CD4-positive, alpha-beta T cell (primary cell): ENCODE measurements at regions of chr11 and their contacts with region 1.

Region 1: DNA sequence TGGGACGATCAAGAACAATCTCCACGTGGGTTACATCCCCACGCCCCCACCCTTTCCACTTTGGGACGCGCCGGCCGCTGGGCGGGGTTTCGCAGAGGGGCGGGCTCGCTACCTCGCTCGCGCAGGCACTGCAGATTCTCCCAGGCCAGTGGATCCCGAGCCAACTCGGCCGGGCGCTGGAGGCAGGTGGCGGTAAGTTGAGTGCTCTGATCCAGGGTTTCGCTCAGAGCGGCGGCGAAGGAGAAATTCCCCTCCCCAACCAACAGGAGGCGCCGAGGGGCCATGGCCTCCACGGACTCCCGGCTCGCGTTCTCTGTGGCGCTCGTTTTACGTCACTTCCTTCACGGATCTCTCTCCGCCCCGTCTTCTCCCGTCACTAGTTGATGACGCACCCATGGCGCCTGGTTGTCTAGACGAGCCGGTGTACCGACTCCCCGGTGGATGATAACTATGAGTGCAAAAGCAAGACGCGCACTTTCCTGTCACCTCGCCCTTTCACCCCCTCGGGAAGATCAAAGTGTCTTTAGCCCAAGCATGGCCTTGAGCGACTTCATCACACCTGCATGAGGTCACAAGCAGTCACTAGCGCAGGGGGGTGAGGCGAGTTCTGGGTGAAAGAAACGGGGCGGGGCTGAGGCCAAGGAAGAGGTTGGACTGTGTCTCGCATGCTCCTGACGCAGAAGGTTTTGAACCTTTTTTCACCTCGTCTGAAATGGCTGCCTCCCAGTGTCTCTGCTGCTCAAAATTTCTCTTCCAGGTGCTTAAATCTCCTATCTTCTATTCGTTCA is at the starts of genes CFAP68 and FDXACB1:
- DNase-seq: peak; percentile 89 to 99 (median 93)
- ATAC-seq: peak; percentile 88
- H3K4me3 ChIP-seq: peak within 1 kb of the TSS; percentile 76
- H3K4me3 Mint-ChIP-seq: peak within 1 kb of the TSS; percentile 92
- H3K27ac ChIP-seq: peak within 1 kb of the TSS; percentile 97 to 99
- H3K27ac Mint-ChIP-seq: peak within 1 kb of the TSS; percentile 94
- H3K4me1 ChIP-seq: peaks cover 14% of the 10 kb centered on the region
- H3K4me1 Mint-ChIP-seq: peaks cover 18% of the 10 kb centered on the region
- H3K27me3 ChIP-seq: no peaks in the 10 kb centered on the region
- H3K27me3 Mint-ChIP-seq: no peaks in the 10 kb centered on the region
- CTCF ChIP-seq: peak; percentile 98
- total RNA-seq, gene CFAP68: 18.7 to 21.0 TPM
- total RNA-seq, gene FDXACB1: 3.4 to 3.9 TPM

Region 2: DNA sequence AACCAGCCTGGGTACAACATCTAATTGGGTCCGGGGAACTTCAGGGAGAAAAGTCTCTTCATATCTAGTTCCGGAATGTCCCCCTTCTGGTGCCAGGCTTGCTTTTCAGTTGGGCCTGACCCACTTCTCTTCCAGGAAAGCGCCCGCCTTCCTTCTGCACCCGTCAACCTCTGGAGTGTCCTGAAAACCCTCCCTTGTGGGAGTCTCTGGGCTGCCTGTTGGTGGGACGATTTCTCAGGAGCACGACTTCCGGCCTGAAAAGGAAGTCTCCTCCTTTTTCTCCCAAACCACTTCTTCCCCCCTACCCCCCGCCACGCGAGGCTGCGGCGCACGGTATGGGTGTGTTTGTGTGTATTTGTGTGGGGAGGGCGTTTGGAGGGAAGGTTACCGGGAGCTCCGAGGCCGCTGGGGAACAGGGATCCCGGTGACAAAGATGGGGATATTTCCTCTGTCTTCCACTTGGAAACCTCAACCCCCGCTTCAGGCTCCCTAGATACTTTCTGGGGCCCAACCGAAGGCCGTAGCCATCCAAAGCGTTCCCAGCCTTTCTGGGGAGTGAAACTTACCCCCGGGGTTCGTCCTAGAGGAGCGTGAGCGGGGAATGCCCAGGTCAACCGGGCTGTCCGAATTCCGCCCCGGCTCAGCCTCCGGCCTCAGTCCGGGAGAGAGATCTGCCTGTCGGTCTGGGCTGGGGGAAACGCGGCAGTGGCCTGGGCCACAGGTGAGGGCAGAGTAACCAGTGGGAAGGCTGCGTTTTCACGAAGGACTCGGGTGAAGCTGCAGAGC is 195.2 kb after region 1 on chr11 and contains the start of gene NKAPD1:
- CTCF ChIA-PET with region 1: no interaction called
- POLR2A ChIA-PET with region 1: no interaction called
- intact Hi-C with region 1: loop called (anchors 2 to 5 kb)
- DNase-seq: peak; percentile 65 to 92 (median 74)
- ATAC-seq: peak; percentile 87
- H3K4me3 ChIP-seq: peak within 1 kb of the TSS; percentile 80
- H3K4me3 Mint-ChIP-seq: peak within 1 kb of the TSS; percentile 97
- H3K27ac ChIP-seq: peak within 1 kb of the TSS; percentile 70 to 73
- H3K27ac Mint-ChIP-seq: peak within 1 kb of the TSS; percentile 78
- H3K4me1 ChIP-seq: peaks cover 13% of the 10 kb centered on the region
- H3K4me1 Mint-ChIP-seq: peaks cover 36% of the 10 kb centered on the region
- H3K27me3 ChIP-seq: no peaks in the 10 kb centered on the region
- H3K27me3 Mint-ChIP-seq: peaks cover 27% of the 10 kb centered on the region
- CTCF ChIP-seq: no peak
- total RNA-seq, gene NKAPD1: 14.8 to 16.0 TPM

Region 3: GRCh38 chr11:112086422-112087191 is 207.6 kb after region 1 on chr11 and contains the starts of genes SDHD and TIMM8B:
- CTCF ChIA-PET with region 1: no interaction called
- POLR2A ChIA-PET with region 1: no interaction called
- intact Hi-C with region 1: loop called (anchors 1 to 2 kb)
- DNase-seq: peak; percentile 91 to 99 (median 94)
- ATAC-seq: peak; percentile 93
- H3K4me3 ChIP-seq: peak within 1 kb of the TSS; percentile 88
- H3K4me3 Mint-ChIP-seq: peak within 1 kb of the TSS; percentile 99
- H3K27ac ChIP-seq: peak within 1 kb of the TSS; percentile 35 to 75
- H3K27ac Mint-ChIP-seq: peak within 1 kb of the TSS; percentile 94
- H3K4me1 ChIP-seq: peaks cover 32% of the 10 kb centered on the region
- H3K4me1 Mint-ChIP-seq: peaks cover 54% of the 10 kb centered on the region
- H3K27me3 ChIP-seq: no peaks in the 10 kb centered on the region
- H3K27me3 Mint-ChIP-seq: no peaks in the 10 kb centered on the region
- CTCF ChIP-seq: peak; percentile 29
- total RNA-seq, gene SDHD: 24.8 to 29.4 TPM
- total RNA-seq, gene TIMM8B: 9.1 to 10.5 TPM